ENCODE measurements at regions of chr10 and their contacts with region 1.

Region 1: GRCh38 chr10:62244780-62245467 is 23.7 kb downstream of the RTKN2 start:
- DNase-seq: peak; percentile 72
- H3K4me3 ChIP-seq: no peak overlapping the region
- H3K27ac ChIP-seq: no peak overlapping the region
- H3K4me1 ChIP-seq: no peaks in the 10 kb centered on the region
- H3K27me3 ChIP-seq: no peaks in the 10 kb centered on the region
- CTCF ChIP-seq: peak; percentile 83 to 86 (median 83)
- POLR2A ChIP-seq: no peak

Region 2: DNA sequence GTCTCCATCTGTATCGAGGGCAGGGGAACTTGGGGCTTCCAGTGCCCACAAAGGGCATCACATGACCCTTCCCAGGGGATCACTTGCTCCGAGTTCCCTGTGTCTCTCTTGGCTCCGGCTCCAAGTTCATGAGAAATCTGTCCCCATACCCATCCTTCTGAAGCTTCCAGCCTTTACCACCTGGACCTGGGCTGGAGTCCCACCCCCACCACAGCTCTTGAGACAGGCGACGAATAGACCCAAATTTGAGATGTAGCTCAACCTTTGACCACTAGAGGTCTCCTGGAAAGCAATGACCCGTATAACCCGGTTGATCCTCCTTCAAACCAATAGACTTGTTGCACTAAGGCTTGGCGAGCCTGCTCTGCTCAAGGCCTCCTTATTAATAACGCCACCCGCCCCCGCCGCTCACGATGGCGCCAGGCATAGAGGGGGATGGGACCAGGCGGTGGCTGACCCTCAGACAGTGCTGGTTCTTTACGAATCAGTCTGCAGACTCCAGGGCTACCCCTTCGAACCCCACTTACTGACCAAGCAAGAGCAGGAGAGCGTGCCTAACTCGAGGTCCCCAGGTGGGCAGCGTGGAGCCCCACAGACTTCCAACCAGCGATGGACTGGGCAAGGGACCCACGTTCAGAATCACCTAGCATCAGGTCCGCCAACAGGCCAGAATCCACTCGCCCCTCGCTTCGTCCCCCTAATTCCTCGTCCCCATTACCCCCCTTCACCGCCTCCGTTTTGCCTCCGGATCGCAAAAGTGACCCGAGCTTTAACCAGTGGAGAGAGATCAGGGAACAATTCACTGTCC is 347.9 kb before region 1 on chr10:
- intact Hi-C with region 1: loop called (anchors 10 kb)
- DNase-seq: peak; percentile 86
- H3K4me3 ChIP-seq: peak overlapping the region; percentile 39 to 40
- H3K27ac ChIP-seq: peak overlapping the region; percentile 62 to 76
- H3K4me1 ChIP-seq: peaks cover 9% of the 10 kb centered on the region
- H3K27me3 ChIP-seq: no peaks in the 10 kb centered on the region
- CTCF ChIP-seq: peak; percentile 72 to 81 (median 73)
- POLR2A ChIP-seq: no peak

Region 3: GRCh38 chr10:61992671-61993668 is 252.0 kb before region 1 on chr10:
- intact Hi-C with region 1: no loop called
- DNase-seq: peak; percentile 78
- H3K4me3 ChIP-seq: no peak overlapping the region
- H3K27ac ChIP-seq: peak overlapping the region; percentile 61 to 77
- H3K4me1 ChIP-seq: peaks cover 54% of the 10 kb centered on the region
- H3K27me3 ChIP-seq: no peaks in the 10 kb centered on the region
- CTCF ChIP-seq: no peak
- POLR2A ChIP-seq: no peak

Region 4: DNA sequence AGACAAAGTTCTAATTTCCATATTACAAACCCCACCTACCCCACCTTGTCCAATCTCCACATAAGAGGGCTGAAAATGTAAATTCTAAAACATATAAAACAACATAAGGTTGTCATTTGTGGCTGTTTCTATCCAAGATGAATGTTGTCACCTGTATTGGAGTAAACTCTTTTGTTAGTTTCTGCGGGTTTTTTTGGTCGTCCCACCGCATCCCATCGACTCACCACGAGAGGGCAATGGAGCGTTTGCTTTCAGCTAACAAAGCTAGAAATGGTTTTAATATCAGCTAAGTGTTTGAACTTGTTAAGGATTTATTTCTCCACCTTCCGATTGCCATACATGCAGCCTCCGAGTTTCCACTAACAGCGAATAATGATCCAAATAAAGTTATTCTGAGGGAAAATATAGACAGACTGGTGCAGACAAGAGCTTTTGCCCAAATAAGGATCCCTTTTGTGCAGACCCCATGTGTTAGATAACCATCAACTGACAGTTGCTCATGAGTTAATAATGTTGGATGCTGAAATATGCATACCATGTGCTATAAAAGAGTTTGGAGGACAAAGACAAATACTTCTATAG is 206.2 kb before region 1 on chr10:
- intact Hi-C with region 1: loop called (anchors 5 kb)
- DNase-seq: peak; percentile 80
- H3K4me3 ChIP-seq: no peak overlapping the region
- H3K27ac ChIP-seq: peak overlapping the region in 1 of 2 donors; percentile 46
- H3K4me1 ChIP-seq: peaks cover 8% of the 10 kb centered on the region
- H3K27me3 ChIP-seq: no peaks in the 10 kb centered on the region
- CTCF ChIP-seq: peak; percentile 68 to 79 (median 74)
- POLR2A ChIP-seq: no peak